Sciatic nerve (tissue), 2 donors: ENCODE measurements at regions of chr1 and their contacts with region 1.

Region 1: GRCh38 chr1:164006621-164007020 is 552.4 kb upstream of the PBX1 start:
- DNase-seq: no peak
- ATAC-seq: no peak

Region 2: GRCh38 chr1:163870666-163871065 is 136.0 kb before region 1 on chr1:
- intact Hi-C with region 1: no loop called
- DNase-seq: no peak
- ATAC-seq: no peak

Region 3: GRCh38 chr1:163935738-163936374 is 70.8 kb before region 1 on chr1:
- intact Hi-C with region 1: no loop called
- DNase-seq: no peak
- ATAC-seq: no peak

Region 4: DNA sequence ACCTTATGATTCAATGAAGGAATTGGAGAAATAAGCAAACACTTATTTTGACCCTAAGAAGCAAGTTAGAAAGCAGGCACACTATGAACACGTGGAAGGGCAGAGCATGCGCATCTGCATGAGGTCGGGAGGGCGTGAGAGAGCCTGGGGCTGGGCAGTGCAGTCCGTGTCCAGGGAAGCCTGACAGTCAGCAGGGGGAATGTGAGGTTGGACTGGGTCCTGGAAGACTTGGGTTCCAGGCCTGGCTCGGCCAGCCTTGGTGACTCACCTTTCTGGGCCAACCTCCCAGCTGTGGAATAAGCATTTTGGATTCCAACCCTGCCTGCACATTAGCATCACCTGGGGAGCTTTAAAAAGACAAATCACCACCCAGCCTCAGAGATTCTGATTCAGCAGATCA is 1376.4 kb after region 1 on chr1:
- intact Hi-C with region 1: loop called (anchors 5 kb)
- DNase-seq: peak; percentile 82
- ATAC-seq: peak; percentile 98